ENCODE measurements at regions of chr14 and their contacts with region 1.

Region 1: GRCh38 chr14:80954687-80955299 is 628 bp upstream of the TSHR start:
- DNase-seq: peak; percentile 81
- ATAC-seq: peak; percentile 63
- H3K4me3 ChIP-seq: peak overlapping the region; percentile 36 to 61 (median 53)
- H3K4me3 Mint-ChIP-seq: peak overlapping the region; percentile 88
- H3K27ac ChIP-seq: no peak overlapping the region
- H3K27ac Mint-ChIP-seq: no peak overlapping the region
- H3K4me1 ChIP-seq: peaks cover 25 to 39% of the 10 kb centered on the region in 2 donors
- H3K4me1 Mint-ChIP-seq: peaks cover 52% of the 10 kb centered on the region
- H3K27me3 ChIP-seq: peaks cover 0 to 10% (median 4%) of the 10 kb centered on the region in 4 experiments
- H3K27me3 Mint-ChIP-seq: peaks cover 7% of the 10 kb centered on the region
- CTCF ChIP-seq: peak; percentile 82

Region 2: DNA sequence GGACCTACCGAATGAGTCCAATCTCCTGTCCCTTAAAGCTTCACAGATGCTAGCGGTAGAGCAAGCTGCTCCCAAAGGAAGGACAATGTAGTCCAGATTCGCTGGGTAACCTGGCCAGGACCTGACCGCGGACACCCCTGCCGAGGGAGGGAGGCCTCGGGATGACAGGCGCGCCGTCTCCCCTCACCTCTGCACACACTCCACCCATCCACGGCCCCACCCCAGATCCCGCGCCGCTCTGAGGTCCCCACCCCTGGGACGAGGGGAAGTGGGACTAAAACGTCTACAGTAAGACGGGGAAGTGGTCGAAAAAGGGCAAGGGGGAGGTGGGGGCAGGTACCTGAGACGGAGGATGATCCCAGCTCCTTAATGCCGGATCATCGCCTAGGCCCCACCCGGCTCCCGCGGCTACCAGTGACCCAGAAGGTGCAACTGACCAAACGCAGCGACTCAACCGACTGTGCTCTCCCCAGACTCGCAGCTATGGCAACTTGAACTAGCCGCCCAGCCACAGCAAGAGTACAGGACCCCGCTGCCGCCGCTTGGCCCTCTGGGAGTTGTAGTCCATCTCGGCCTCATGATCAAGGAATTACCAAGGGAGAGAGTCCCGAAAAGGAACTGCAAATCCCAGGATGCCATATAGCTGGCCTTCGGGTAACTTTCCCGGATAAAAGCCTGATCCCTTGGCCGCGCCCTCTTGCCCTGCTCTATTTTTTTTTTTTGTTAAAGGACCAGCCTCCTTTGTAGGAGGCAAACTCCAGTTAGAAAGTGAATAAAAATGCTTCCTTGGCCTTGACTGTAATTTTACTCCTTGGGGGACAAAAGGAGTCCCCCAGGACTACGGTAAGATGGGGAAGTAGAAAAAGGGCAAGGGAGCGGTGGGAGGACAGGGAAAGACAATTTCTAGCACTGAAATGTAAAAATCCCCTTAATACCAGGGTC is 13.3 kb before region 1 on chr14 and contains the start of gene CEP128:
- CTCF ChIA-PET with region 1: interaction called, 13 read pairs
- POLR2A ChIA-PET with region 1: no interaction called
- intact Hi-C with region 1: loop called (anchors 2 kb)
- DNase-seq: peak; percentile 80
- ATAC-seq: peak; percentile 92
- H3K4me3 ChIP-seq: peak within 1 kb of the TSS; percentile 71 to 83 (median 71)
- H3K4me3 Mint-ChIP-seq: peak within 1 kb of the TSS; percentile 84
- H3K27ac ChIP-seq: peak within 1 kb of the TSS; percentile 15 to 59
- H3K27ac Mint-ChIP-seq: peak within 1 kb of the TSS; percentile 71
- H3K4me1 ChIP-seq: peaks cover 15 to 18% of the 10 kb centered on the region in 2 donors
- H3K4me1 Mint-ChIP-seq: peaks cover 19% of the 10 kb centered on the region
- H3K27me3 ChIP-seq: no peaks in the 10 kb centered on the region
- H3K27me3 Mint-ChIP-seq: no peaks in the 10 kb centered on the region
- CTCF ChIP-seq: no peak
- total RNA-seq, gene CEP128: 31.6 and 34.8 TPM in 2 replicates

Region 3: DNA sequence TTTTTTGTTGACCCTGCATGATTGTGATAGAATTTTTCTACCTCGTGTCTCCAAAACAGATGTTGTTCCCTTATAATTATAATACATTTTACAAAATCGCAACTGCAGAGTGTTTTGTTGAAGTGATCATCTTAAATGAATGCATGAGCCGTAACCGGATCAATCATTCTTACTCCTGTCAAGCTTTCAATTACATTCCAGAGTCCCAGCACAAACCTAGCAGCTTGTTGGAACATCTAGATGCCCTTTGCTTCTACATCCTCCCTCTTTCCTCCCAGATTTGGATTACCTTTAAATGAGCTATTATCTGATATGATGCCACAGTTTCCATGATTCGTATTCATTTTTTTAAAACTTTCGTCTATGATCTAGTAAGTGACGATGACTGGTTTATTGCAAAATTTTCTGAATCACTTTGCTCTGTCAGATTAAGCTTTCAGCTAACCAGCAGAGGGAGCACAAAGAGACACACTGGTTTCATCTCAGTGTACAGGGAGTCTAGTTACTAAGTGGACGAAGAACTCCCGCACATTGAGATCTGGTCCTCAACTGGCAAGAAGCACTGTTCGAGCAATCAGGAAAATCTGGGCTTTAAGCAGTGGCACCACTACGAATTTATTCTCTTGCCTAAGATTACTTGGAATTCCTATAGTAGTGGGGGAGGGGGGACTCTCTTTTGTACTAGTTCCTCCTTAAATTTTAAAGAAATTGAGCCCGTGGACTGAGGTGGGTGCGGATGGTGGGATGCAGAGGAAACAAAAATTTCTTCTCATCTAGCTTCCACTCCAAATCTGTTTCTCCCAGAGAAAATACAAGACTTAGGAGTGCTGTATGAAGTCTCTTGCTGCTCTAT is 41.5 kb after region 1 on chr14:
- CTCF ChIA-PET with region 1: interaction called, 14 read pairs
- POLR2A ChIA-PET with region 1: no interaction called
- intact Hi-C with region 1: no loop called
- DNase-seq: peak; percentile 52
- ATAC-seq: peak; percentile 61
- H3K4me3 ChIP-seq: no peak overlapping the region
- H3K4me3 Mint-ChIP-seq: no peak overlapping the region
- H3K27ac ChIP-seq: no peak overlapping the region
- H3K27ac Mint-ChIP-seq: no peak overlapping the region
- H3K4me1 ChIP-seq: peaks cover 4 to 7% of the 10 kb centered on the region in 2 donors
- H3K4me1 Mint-ChIP-seq: peaks cover 4% of the 10 kb centered on the region
- H3K27me3 ChIP-seq: peaks cover 0 to 4% (median 1%) of the 10 kb centered on the region in 4 experiments
- H3K27me3 Mint-ChIP-seq: peaks cover 38% of the 10 kb centered on the region
- CTCF ChIP-seq: peak; percentile 61

Region 4: DNA sequence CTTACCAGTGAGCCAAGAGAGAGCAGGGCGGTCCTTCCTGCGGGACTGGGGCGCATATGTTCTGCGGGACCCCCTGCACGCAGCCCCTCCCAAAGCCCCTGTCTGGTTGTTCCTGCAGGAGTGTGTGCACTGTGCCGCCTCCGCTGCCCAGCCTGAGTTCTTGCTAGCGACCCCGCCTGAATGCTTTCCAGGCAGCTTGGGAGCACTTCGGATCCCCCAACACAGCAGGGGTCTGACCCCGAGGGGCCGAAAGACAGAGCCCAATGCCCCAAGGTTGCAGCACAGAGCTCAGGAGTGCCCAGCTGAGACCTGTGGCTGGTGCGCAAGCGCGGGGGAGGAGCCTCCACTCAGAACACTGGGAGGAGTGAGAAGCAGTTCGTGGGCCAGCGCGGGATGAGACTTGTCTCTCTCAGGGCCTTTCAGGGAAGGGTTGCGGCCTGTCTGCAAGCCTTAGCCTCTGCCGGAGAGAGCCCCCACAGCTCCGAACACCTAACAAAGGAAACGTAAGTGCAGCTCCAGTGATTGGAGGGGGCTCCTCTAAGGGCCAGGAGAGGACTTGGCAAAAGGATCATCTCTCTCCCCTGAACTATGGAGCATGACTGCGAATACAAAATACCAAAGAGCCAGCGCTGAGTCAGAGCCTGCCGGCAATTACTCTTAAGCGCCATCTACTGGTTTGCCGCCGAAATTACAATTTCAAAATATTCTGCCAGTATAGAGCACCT is 215.5 kb after region 1 on chr14:
- CTCF ChIA-PET with region 1: interaction called, 6 read pairs
- POLR2A ChIA-PET with region 1: no interaction called
- intact Hi-C with region 1: loop called (anchors 1 kb)
- DNase-seq: peak; percentile 91
- ATAC-seq: peak; percentile 97
- H3K4me3 ChIP-seq: peak overlapping the region; percentile 39 to 73 (median 63)
- H3K4me3 Mint-ChIP-seq: peak overlapping the region; percentile 94
- H3K27ac ChIP-seq: peak overlapping the region; percentile 71 to 73
- H3K27ac Mint-ChIP-seq: peak overlapping the region; percentile 97
- H3K4me1 ChIP-seq: peaks cover 16 to 21% of the 10 kb centered on the region in 2 donors
- H3K4me1 Mint-ChIP-seq: peaks cover 46% of the 10 kb centered on the region
- H3K27me3 ChIP-seq: no peaks in the 10 kb centered on the region
- H3K27me3 Mint-ChIP-seq: no peaks in the 10 kb centered on the region
- CTCF ChIP-seq: peak; percentile 92

Region 5: GRCh38 chr14:81220830-81221578 is 266.2 kb after region 1 on chr14 and contains the start of gene GTF2A1:
- CTCF ChIA-PET with region 1: no interaction called
- POLR2A ChIA-PET with region 1: interaction called, 3 read pairs
- intact Hi-C with region 1: loop called (anchors 1 kb)
- DNase-seq: peak; percentile 99
- ATAC-seq: peak; percentile 70
- H3K4me3 ChIP-seq: peak within 1 kb of the TSS; percentile 89 to 99 (median 97)
- H3K4me3 Mint-ChIP-seq: peak within 1 kb of the TSS; percentile 97
- H3K27ac ChIP-seq: peak within 1 kb of the TSS; percentile 98 to 99
- H3K27ac Mint-ChIP-seq: peak within 1 kb of the TSS; percentile 100
- H3K4me1 ChIP-seq: peaks cover 13 to 16% of the 10 kb centered on the region in 2 donors
- H3K4me1 Mint-ChIP-seq: peaks cover 32% of the 10 kb centered on the region
- H3K27me3 ChIP-seq: no peaks in the 10 kb centered on the region
- H3K27me3 Mint-ChIP-seq: no peaks in the 10 kb centered on the region
- CTCF ChIP-seq: no peak
- total RNA-seq, gene GTF2A1: 44.0 and 45.1 TPM in 2 replicates